H1 (cell line): ENCODE measurements at regions of chr22 and their contacts with region 1.

Region 1: GRCh38 chr22:17754233-17754925 is 19.9 kb downstream of the BID start:
- DNase-seq: no peak
- H3K4me3 ChIP-seq: no peak overlapping the region
- H3K27ac ChIP-seq: no peak overlapping the region
- H3K4me1 ChIP-seq: no peaks in the 10 kb centered on the region; a peak in 1 of 7 replicates
- H3K27me3 ChIP-seq: no peaks in the 10 kb centered on the region
- CTCF ChIP-seq: peak; percentile 73 to 85 (median 82)
- EP300 ChIP-seq: no peak
- POLR2A ChIP-seq: no peak
- RAD21 ChIP-seq: peak; percentile 86 to 89

Region 2: GRCh38 chr22:17678872-17679271 is 75.5 kb before region 1 on chr22:
- CTCF ChIA-PET with region 1: no interaction called
- POLR2A ChIA-PET with region 1: no interaction called
- DNase-seq: no peak
- H3K4me3 ChIP-seq: no peak overlapping the region
- H3K27ac ChIP-seq: no peak overlapping the region; the same call in 1 of the 2 replicates
- H3K4me1 ChIP-seq: peaks cover 0 to 6% (median 3%) of the 10 kb centered on the region in 4 experiments; a peak in 3 of 7 replicates
- H3K27me3 ChIP-seq: no peaks in the 10 kb centered on the region
- CTCF ChIP-seq: no peak
- EP300 ChIP-seq: no peak
- POLR2A ChIP-seq: no peak
- RAD21 ChIP-seq: no peak

Region 3: DNA sequence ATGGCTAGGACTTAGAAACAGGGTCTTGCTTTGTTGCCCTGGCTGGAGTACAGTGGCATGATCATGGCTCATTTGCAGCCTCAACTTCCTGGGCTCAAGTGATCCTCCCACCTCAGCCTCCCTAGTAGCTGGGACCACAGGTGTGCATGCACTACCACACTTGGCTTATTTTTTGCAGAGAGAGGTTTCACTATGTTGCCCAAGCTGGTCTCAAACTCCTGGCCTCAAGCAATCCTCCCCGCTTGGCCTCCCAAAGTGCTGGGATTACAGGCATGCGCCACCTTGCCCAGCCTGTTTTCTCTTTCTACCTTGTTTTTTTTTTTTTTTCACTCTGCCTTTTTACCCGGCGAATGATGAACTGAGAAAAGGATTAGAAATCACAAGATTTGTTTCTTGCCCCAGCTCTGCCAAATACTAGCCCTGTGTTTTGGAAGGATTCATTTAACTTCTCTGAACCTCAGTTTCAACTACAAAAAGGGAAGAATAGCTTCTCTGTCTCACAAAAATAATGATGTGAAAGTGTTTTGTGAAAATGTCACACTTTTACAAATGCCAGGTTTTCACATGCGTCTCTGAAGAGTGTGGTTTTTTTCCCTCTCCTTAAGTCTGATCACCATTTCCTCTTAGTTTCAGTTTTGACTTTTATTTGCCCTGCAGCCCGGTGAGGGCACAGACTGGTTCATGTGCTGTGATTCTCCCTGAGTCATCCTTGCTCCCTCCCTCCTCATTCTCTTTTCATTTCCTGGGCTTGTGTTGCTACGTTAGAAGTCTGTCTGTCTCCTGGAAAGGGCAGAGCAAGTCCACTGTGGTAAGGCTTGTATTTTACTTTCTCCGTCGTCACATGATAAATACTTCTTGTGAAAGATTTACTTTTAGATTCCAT is 48.1 kb before region 1 on chr22:
- CTCF ChIA-PET with region 1: no interaction called
- POLR2A ChIA-PET with region 1: no interaction called
- DNase-seq: no peak
- H3K4me3 ChIP-seq: no peak overlapping the region
- H3K27ac ChIP-seq: no peak overlapping the region
- H3K4me1 ChIP-seq: no peaks in the 10 kb centered on the region
- H3K27me3 ChIP-seq: no peaks in the 10 kb centered on the region
- CTCF ChIP-seq: no peak
- EP300 ChIP-seq: no peak
- POLR2A ChIP-seq: no peak
- RAD21 ChIP-seq: no peak

Region 4: GRCh38 chr22:17742527-17742902 is 11.9 kb before region 1 on chr22:
- CTCF ChIA-PET with region 1: interaction called, 44 read pairs
- POLR2A ChIA-PET with region 1: no interaction called
- DNase-seq: peak; percentile 80 to 96
- H3K4me3 ChIP-seq: no peak overlapping the region
- H3K27ac ChIP-seq: no peak overlapping the region
- H3K4me1 ChIP-seq: peaks cover 0 to 7% (median 4%) of the 10 kb centered on the region in 4 experiments; a peak in 5 of 7 replicates
- H3K27me3 ChIP-seq: no peaks in the 10 kb centered on the region
- CTCF ChIP-seq: peak; percentile 90 to 98 (median 96)
- EP300 ChIP-seq: peak in 1 of 2 experiments; percentile 64; a peak in 1 of 3 replicates
- POLR2A ChIP-seq: no peak
- RAD21 ChIP-seq: peak; percentile 94 to 97

Region 5: DNA sequence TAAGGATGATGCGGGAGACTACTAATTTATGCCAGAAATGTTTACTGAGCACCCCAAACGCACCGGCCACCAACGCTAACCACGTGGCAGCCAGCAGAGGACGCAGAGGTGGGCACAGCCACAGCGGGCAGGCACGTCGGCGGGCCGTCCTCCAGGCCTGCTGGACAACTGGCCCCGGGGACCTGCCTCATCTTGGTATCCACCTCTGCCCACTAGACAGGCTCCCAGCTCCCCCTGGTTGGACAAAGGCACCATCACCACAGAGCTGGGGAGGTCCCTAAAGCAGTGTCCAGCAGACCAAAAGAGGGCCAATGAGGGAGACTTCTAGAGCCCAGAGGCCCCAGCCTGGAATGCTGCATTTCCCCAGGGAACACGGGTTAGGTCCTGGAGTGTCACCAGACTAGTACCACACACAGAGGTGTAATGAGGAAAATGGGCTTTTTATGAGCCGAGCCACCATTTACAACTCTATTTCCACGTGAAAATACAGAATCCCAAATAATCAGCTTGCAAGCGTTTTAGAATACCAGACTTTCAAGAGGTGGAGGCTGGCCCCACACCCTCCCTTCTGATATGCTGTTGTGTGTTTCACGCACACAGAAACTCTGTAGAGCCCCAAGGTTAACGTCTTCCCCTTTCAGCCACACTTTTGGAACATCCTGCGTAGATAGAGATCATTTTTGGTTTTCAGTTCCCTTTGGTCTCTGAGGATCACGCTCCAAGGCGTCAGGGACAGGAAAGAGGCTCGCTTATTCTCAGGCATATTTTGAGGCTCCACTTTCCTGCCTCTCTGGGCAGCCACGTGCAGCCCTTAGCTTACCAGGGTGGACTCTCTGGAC is 43.6 kb after region 1 on chr22:
- CTCF ChIA-PET with region 1: no interaction called
- POLR2A ChIA-PET with region 1: no interaction called
- DNase-seq: no peak
- H3K4me3 ChIP-seq: no peak overlapping the region
- H3K27ac ChIP-seq: no peak overlapping the region
- H3K4me1 ChIP-seq: no peaks in the 10 kb centered on the region
- H3K27me3 ChIP-seq: no peaks in the 10 kb centered on the region
- CTCF ChIP-seq: no peak
- EP300 ChIP-seq: no peak
- POLR2A ChIP-seq: no peak
- RAD21 ChIP-seq: no peak